ENCODE measurements at regions of chr15 and their contacts with region 1.

Region 1: DNA sequence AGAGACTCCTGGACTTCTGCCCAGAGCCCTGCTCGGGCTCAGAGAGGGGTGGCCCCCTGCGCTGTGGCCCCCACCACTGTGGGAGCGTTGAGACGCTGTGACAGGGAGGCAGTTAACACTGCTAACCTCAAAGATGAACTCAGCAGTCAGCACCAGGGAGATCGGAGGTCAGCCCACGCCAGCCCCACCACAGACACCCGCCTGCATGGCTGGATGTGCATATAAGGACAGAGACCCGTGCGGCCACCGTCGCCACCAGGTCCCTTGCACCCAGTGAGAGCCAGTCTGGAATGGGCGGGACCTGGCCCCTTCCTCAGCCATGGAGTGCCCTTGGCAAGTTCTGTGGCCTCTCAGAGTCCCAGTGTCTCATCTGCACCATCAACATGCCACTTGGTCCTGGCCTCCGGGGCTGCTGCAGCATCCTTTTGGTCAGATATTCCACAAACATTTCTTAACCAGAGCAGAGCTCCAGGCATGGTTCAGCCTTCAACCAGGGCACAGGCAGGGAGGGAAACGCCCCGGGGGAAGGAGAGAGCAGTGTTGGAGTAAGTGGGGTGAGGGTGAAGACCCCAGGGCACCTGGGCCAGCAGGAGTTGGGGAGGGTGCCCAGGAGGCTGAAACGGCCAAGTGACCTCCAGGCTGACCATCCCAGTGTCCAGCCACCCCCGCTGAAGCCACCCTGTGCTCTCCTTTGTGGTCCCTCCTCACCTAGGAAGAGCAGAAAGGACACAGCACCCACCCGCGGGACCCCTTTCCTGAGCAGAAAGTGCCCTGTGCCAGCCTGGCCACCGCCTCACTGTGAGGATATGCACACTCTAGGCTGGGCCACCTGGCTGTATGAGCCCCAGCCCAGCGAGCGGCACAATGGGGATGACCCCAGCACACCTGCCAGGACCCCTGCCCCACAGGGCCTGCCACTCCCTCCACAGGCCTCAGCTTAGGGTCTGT is 48.3 kb upstream of the FURIN start:
- DNase-seq: no peak
- H3K4me3 ChIP-seq: no peak overlapping the region
- H3K27ac ChIP-seq: no peak overlapping the region
- H3K4me1 ChIP-seq: no peaks in the 10 kb centered on the region
- H3K27me3 ChIP-seq: no peaks in the 10 kb centered on the region
- CTCF ChIP-seq: no peak

Region 2: GRCh38 chr15:90336705-90337141 is 483.4 kb before region 1 on chr15:
- CTCF ChIA-PET with region 1: no interaction called
- POLR2A ChIA-PET with region 1: interaction called, 12 read pairs
- intact Hi-C with region 1: no loop called
- DNase-seq: peak in 1 of 2 experiments; percentile 96
- H3K4me3 ChIP-seq: no peak overlapping the region
- H3K27ac ChIP-seq: peak overlapping the region; percentile 74
- H3K4me1 ChIP-seq: peaks cover 45% of the 10 kb centered on the region
- H3K27me3 ChIP-seq: no peaks in the 10 kb centered on the region
- CTCF ChIP-seq: no peak

Region 3: GRCh38 chr15:90686435-90687218 is 133.5 kb before region 1 on chr15:
- CTCF ChIA-PET with region 1: no interaction called
- POLR2A ChIA-PET with region 1: no interaction called
- intact Hi-C with region 1: no loop called
- DNase-seq: no peak
- H3K4me3 ChIP-seq: no peak overlapping the region
- H3K27ac ChIP-seq: no peak overlapping the region
- H3K4me1 ChIP-seq: no peaks in the 10 kb centered on the region
- H3K27me3 ChIP-seq: no peaks in the 10 kb centered on the region
- CTCF ChIP-seq: no peak

Region 4: GRCh38 chr15:90895336-90896117 is 75.4 kb after region 1 on chr15:
- CTCF ChIA-PET with region 1: no interaction called
- POLR2A ChIA-PET with region 1: interaction called, 11 read pairs
- intact Hi-C with region 1: no loop called
- DNase-seq: no peak
- H3K4me3 ChIP-seq: no peak overlapping the region
- H3K27ac ChIP-seq: no peak overlapping the region
- H3K4me1 ChIP-seq: no peaks in the 10 kb centered on the region
- H3K27me3 ChIP-seq: no peaks in the 10 kb centered on the region
- CTCF ChIP-seq: no peak

Measured in PC-9 (cell line).